ENCODE measurements at regions of chr14 and their contacts with region 1.

Region 1: DNA sequence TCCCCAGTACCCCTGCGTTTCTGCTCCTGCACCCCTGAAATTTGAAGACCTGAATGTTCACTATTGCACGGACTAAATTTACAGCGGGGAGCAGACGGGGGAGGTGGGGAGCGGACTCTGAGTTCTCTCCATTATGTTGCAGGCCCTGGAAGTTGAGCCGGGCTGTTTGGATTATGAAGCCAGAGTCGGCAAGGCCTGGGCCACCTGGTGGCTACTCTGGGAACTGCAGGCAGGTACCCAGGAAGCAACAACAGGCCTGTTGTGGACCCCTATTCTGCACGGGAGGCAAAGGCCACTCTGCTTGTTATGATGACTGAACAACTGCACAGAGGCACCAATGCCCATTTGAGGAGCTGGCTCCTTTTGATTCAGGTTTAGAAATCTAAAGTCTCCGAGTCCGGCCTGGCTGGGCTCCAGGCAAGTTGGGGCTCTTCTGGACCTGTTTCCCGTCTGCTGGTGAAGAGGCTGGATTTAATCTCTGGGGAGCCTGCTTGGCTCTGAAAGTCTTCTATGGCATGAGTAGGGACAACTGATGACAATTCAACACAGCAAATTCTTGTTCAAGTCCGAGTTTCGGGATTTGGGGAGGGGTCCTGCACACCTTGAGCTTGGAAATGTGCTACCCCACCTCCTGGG is 34.1 kb upstream of the FAM181A start:
- DNase-seq: peak; percentile 20
- H3K4me3 ChIP-seq: no peak overlapping the region
- H3K27ac ChIP-seq: no peak overlapping the region
- H3K27me3 ChIP-seq: peaks cover 24% of the 10 kb centered on the region
- CTCF ChIP-seq: peak; percentile 100

Region 2: DNA sequence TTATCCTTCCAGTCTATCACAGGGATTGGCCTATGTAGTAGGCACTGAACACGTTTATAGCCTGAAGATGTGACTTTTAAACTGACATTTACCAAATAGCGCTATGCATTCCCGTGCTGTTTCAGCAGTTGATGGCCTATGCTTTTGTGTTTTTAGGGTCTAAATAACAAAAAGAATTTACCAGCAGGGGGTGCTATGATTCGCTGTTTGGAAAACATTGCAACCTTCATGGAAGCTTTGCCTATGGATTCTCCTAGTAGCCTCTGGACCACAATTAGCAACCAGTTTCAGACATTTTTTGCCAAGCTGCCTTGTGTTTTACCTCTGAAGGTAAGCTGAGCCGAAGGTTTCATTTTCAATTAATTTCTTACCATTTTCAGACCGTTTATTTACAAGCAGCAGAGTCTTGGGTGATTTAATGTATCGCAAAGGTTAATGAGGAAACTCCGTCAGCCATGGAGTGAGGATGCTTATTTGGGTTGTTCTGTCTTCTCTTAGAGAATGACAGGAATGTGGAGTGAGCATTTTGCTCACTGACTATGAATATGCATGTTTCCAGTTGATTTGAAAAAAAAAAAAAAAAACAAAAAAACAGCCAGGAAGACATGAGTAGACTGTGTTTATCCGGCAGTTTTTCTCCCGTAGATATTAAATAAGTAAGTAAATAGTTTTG is 237.8 kb before region 1 on chr14:
- CTCF ChIA-PET with region 1: interaction called, 20 read pairs
- POLR2A ChIA-PET with region 1: no interaction called
- DNase-seq: no peak
- H3K4me3 ChIP-seq: no peak overlapping the region
- H3K27ac ChIP-seq: no peak overlapping the region
- H3K27me3 ChIP-seq: no peaks in the 10 kb centered on the region
- CTCF ChIP-seq: peak; percentile 53

Region 3: GRCh38 chr14:93970549-93970946 is 77.5 kb after region 1 on chr14:
- CTCF ChIA-PET with region 1: no interaction called
- POLR2A ChIA-PET with region 1: no interaction called
- DNase-seq: no peak
- H3K4me3 ChIP-seq: no peak overlapping the region
- H3K27ac ChIP-seq: no peak overlapping the region
- H3K27me3 ChIP-seq: no peaks in the 10 kb centered on the region
- CTCF ChIP-seq: peak; percentile 28

Region 4: DNA sequence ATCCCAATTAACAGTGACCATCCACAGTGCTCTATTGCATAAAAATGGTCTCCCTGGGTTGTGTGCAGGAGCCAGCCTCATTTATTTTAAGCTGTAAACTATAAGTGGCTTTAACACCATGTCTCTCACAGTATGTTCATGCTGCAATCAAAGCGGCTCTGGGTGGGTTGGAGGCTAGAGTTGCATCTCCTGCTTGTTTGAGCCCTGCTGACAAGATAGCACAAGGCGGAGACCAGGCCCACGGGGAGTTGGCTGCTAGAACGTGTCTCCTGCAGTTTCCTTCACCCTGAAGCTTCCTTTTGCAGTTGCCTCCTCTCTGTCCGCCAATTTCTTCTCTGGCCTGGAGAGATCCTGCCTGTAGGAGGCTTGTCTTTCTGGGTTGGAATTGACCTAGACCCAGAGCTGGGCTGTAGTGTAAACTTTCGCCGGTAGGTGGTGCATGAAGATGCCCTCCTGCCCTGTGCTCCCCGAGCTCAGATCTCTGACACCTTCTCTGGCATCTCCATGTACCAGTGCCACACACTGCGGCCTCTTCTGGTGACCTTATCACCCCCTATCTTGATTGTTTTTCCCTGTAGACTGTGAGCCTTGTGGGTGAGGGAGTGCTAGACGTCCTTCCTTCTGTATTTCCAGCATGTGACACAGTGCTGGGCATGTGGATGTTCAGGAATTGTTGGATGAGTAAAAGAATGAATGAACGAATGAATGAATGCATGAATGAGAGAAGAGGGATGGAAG is 143.4 kb after region 1 on chr14:
- CTCF ChIA-PET with region 1: no interaction called
- POLR2A ChIA-PET with region 1: no interaction called
- DNase-seq: peak; percentile 34
- H3K4me3 ChIP-seq: no peak overlapping the region
- H3K27ac ChIP-seq: no peak overlapping the region
- H3K27me3 ChIP-seq: no peaks in the 10 kb centered on the region
- CTCF ChIP-seq: peak; percentile 84